ENCODE measurements at regions of chr3 and their contacts with region 1.

Region 1: GRCh38 chr3:142586803-142587406 is 8.4 kb upstream of the ATR start:
- DNase-seq: no peak
- H3K4me3 Mint-ChIP-seq: no peak overlapping the region
- H3K27ac Mint-ChIP-seq: no peak overlapping the region
- H3K4me1 Mint-ChIP-seq: no peaks in the 10 kb centered on the region
- H3K27me3 Mint-ChIP-seq: peaks cover 4% of the 10 kb centered on the region

Region 2: GRCh38 chr3:142723968-142724681 is 137.2 kb after region 1 on chr3 and contains the start of gene TRPC1:
- CTCF ChIA-PET with region 1: interaction called, 3 read pairs
- POLR2A ChIA-PET with region 1: no interaction called
- intact Hi-C with region 1: loop called (anchors 2 kb)
- DNase-seq: peak; percentile 87
- H3K4me3 Mint-ChIP-seq: peak within 1 kb of the TSS; percentile 85
- H3K27ac Mint-ChIP-seq: peak within 1 kb of the TSS; percentile 82
- H3K4me1 Mint-ChIP-seq: peaks cover 14% of the 10 kb centered on the region
- H3K27me3 Mint-ChIP-seq: peaks cover 15% of the 10 kb centered on the region
- total RNA-seq, gene TRPC1: 2.8 to 3.8 TPM

Region 3: GRCh38 chr3:142987080-142987700 is 400.3 kb after region 1 on chr3:
- CTCF ChIA-PET with region 1: interaction called, 5 read pairs
- POLR2A ChIA-PET with region 1: no interaction called
- intact Hi-C with region 1: loop called (anchors 2 kb)
- DNase-seq: no peak
- H3K4me3 Mint-ChIP-seq: no peak overlapping the region
- H3K27ac Mint-ChIP-seq: no peak overlapping the region
- H3K4me1 Mint-ChIP-seq: no peaks in the 10 kb centered on the region
- H3K27me3 Mint-ChIP-seq: peaks cover 10% of the 10 kb centered on the region

Region 4: GRCh38 chr3:142993958-142994442 is 407.1 kb after region 1 on chr3:
- CTCF ChIA-PET with region 1: interaction called, 4 read pairs
- POLR2A ChIA-PET with region 1: no interaction called
- intact Hi-C with region 1: loop called (anchors 2 kb)
- DNase-seq: peak; percentile 75
- H3K4me3 Mint-ChIP-seq: no peak overlapping the region
- H3K27ac Mint-ChIP-seq: no peak overlapping the region
- H3K4me1 Mint-ChIP-seq: peaks cover 2% of the 10 kb centered on the region
- H3K27me3 Mint-ChIP-seq: peaks cover 7% of the 10 kb centered on the region